ENCODE measurements at regions of chrX and their contacts with region 1.

Region 1: DNA sequence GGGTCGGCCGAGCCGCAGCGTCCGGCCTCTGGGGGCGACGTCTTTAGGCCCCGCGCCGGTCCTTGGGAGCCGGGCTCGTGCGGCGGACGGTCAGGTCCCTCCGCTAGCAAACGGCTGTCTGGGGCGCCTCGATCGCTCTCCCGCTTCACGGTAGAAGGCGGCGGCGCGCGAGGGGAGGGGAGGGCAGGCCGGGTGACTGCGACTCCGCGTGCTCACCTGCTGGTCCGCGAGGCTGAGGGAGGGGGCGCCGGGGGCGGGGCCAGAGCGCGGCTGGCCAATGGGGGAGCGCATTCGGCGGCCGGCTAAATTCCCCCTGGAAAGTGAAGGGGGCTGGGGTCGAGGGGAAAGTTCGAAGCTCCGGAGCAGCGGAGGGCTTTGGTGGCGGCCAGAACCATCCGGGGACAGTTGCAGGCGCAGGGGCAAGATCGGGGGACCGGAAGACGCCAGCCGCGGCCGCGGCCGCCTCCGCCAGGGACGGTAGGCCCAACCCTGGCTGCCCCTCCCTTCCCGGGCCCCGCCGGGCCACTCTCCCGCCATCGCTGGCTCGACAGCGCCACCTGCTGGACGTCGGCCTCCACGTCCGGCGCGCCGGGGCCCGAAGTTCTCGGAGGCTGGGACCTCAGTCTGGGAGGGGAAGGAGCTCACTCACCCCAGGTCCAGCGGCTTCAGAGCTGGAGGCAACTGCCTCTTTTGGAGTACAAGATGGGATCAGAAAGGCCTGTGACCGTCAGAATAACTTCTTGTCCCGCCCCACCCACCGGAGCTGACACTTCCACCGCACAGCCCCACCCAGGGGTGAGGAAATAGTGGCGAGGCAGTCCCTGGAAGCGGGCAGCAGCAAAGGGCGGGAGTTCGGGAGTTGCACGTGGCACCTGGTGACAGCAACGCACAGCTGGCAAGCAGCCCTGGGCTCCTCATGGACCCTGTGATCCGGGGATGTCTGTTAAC is 49.9 kb downstream of the ELF4 start:
- DNase-seq: peak; percentile 86
- H3K4me3 ChIP-seq: peak overlapping the region; percentile 30 to 68 (median 42)
- H3K27ac ChIP-seq: peak overlapping the region; percentile 62 to 86 (median 82)
- H3K4me1 ChIP-seq: peaks cover 0 to 11% (median 4%) of the 10 kb centered on the region in 4 donors
- H3K27me3 ChIP-seq: no peaks in the 10 kb centered on the region
- CTCF ChIP-seq: peak; percentile 77 to 95 (median 86)
- EP300 ChIP-seq: no peak
- POLR2A ChIP-seq: peak; percentile 21

Region 2: GRCh38 chrX:129577473-129577872 is 482.9 kb before region 1 on chrX:
- in situ Hi-C with region 1: loop called in 1 of 4 experiments (anchors 25 kb)
- intact Hi-C with region 1: no loop called
- DNase-seq: no peak
- H3K4me3 ChIP-seq: no peak overlapping the region
- H3K27ac ChIP-seq: no peak overlapping the region
- H3K4me1 ChIP-seq: no peaks in the 10 kb centered on the region
- H3K27me3 ChIP-seq: no peaks in the 10 kb centered on the region
- CTCF ChIP-seq: no peak
- EP300 ChIP-seq: no peak
- POLR2A ChIP-seq: no peak

Region 3: DNA sequence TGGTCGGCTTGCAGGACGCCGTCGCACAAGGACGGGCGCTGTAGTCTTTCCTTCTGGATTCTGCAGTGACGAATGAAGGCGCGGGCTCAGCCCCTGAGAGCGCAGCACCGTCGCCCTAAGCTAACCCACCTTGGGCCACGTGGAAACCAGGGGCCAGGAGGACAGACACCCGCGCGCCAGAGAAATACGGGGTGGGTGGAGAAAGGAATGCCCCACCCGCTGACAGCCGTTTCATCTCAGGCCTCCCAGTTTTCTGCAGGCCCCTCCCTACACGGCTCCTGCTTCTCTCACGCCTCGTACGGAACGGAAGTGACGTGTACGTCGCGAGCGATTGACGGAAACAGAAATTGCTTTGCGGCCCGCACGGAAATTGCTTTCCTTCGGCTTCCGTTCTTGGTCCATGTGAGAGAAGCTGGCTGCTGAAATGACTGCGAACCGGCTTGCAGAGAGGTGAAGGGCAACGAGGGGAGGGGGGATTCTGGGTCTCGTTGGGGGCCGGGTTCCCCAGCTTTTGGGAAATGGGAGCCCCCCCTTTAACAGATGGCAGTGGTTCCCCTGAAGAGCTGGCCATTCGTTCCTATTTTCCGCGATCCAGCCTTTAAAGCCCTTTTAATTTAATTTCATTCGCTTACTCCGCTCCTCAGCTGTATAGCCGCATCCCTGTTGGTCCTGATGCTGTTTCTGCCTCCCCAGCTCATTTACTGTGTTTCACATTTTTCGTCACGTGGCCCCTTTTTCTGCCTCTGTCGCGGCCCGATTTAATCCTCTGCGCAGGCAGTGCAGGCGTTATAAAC is 154.4 kb before region 1 on chrX and contains the start of gene UTP14A:
- in situ Hi-C with region 1: no loop called
- intact Hi-C with region 1: loop called (anchors 10 kb)
- DNase-seq: peak; percentile 90
- H3K4me3 ChIP-seq: peak within 1 kb of the TSS; percentile 47 to 75 (median 62)
- H3K27ac ChIP-seq: peak within 1 kb of the TSS; percentile 73 to 88 (median 80)
- H3K4me1 ChIP-seq: peaks cover 0 to 8% (median 3%) of the 10 kb centered on the region in 4 donors
- H3K27me3 ChIP-seq: no peaks in the 10 kb centered on the region
- CTCF ChIP-seq: no peak
- EP300 ChIP-seq: no peak
- POLR2A ChIP-seq: peak; percentile 36
- total RNA-seq, gene UTP14A: 7.2 to 14.7 (median 11.4) TPM